ENCODE measurements at regions of chr1 and their contacts with region 1.

Region 1: DNA sequence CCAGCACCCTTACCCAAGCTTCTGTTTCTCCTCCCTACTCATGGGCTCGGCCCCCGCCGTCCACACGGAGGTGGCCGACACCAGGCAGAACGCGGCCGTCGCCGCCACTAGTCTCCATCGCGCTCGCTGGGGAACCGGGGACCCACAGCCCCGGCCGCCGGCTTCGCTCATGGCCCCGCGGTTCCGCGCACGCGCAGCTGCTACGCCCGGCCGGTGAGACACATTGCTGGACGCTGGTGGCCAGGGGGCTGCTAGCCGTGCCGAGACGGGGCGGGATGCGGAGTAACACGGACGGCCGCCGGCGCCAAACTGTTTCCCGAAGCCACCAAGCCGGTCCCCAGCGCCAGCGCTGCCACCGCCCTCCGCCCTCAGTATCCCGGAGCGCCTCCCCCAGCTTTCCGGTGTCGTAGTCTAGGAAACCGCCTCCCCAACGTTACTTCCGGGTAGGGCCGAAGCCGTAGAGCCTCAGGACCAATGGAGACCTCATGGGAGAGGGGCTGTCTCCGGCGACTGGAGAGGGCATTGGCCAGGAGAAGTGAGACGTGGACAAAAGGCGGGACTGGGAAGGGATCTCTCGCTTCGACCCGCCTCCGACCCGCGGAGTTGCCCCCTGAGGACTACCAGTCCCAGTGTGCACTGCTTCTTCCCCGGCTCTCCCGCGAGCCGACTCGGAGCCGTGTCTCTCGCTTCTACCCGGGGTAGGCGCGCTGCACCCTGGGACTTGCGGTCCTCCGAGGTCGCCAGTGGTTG is at the start of gene EDEM3:
- DNase-seq: peak; percentile 100
- H3K4me3 Mint-ChIP-seq: peak within 1 kb of the TSS; percentile 93
- H3K27ac Mint-ChIP-seq: peak within 1 kb of the TSS; percentile 96
- H3K4me1 Mint-ChIP-seq: peaks cover 27% of the 10 kb centered on the region
- H3K27me3 Mint-ChIP-seq: no peaks in the 10 kb centered on the region
- CTCF ChIP-seq: no peak
- total RNA-seq, gene EDEM3: 58.3 and 63.5 TPM in 2 replicates

Region 2: DNA sequence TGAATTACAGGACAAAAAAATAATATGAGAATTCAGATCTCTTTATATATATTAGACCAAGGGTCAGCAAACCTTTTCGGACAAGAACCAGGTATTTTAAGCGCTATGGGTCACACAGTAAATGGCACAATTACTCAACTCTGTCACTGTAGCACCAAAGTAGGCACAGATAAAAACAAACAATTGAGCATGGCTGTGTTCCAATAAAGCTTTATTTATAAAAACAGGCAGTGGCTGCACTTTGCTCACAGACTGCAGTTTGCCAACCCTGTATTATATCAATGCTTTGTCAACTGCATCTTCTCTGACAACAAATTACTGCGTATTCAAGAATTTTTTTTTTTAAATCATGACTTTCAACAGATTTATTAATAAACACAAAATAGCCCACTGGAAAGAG is 29.8 kb before region 1 on chr1:
- CTCF ChIA-PET with region 1: interaction called, 3 read pairs
- POLR2A ChIA-PET with region 1: interaction called, 22 read pairs
- intact Hi-C with region 1: no loop called
- DNase-seq: no peak
- H3K4me3 Mint-ChIP-seq: no peak overlapping the region
- H3K27ac Mint-ChIP-seq: peak overlapping the region; percentile 90
- H3K4me1 Mint-ChIP-seq: peaks cover 4% of the 10 kb centered on the region
- H3K27me3 Mint-ChIP-seq: no peaks in the 10 kb centered on the region
- CTCF ChIP-seq: no peak

Region 3: DNA sequence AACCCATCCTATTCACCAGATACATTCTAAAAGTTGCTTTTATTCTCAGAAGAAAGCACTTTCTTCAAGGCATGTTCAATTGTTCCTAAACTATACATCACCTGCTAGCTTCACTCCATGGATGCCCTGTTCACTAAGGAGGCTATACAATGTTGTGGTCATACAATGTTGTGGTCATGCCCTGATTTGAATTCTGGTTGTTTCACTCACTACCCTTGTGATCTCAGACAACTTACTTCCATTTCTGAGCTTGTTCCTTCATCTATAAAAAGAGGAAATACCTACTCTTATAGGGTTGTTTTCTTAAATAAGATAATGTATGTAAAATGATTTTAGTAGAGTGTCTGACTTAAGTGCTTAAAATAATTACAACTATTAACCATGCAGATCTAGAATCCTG is 19.7 kb before region 1 on chr1:
- CTCF ChIA-PET with region 1: interaction called, 6 read pairs
- POLR2A ChIA-PET with region 1: interaction called, 12 read pairs
- intact Hi-C with region 1: no loop called
- DNase-seq: no peak
- H3K4me3 Mint-ChIP-seq: no peak overlapping the region
- H3K27ac Mint-ChIP-seq: no peak overlapping the region
- H3K4me1 Mint-ChIP-seq: no peaks in the 10 kb centered on the region
- H3K27me3 Mint-ChIP-seq: no peaks in the 10 kb centered on the region
- CTCF ChIP-seq: no peak

Region 4: GRCh38 chr1:184743062-184743756 is 11.4 kb before region 1 on chr1:
- CTCF ChIA-PET with region 1: interaction called, 7 read pairs
- POLR2A ChIA-PET with region 1: interaction called, 18 read pairs
- intact Hi-C with region 1: no loop called
- DNase-seq: no peak
- H3K4me3 Mint-ChIP-seq: no peak overlapping the region
- H3K27ac Mint-ChIP-seq: no peak overlapping the region
- H3K4me1 Mint-ChIP-seq: peaks cover 24% of the 10 kb centered on the region
- H3K27me3 Mint-ChIP-seq: no peaks in the 10 kb centered on the region
- CTCF ChIP-seq: no peak

Region 5: GRCh38 chr1:184775885-184776284 is 21.2 kb after region 1 on chr1:
- CTCF ChIA-PET with region 1: no interaction called
- POLR2A ChIA-PET with region 1: interaction called, 11 read pairs
- intact Hi-C with region 1: no loop called
- DNase-seq: no peak
- H3K4me3 Mint-ChIP-seq: no peak overlapping the region
- H3K27ac Mint-ChIP-seq: no peak overlapping the region
- H3K4me1 Mint-ChIP-seq: no peaks in the 10 kb centered on the region
- H3K27me3 Mint-ChIP-seq: no peaks in the 10 kb centered on the region
- CTCF ChIP-seq: no peak

Region 6: GRCh38 chr1:184792450-184792969 is 37.9 kb after region 1 on chr1:
- CTCF ChIA-PET with region 1: interaction called, 3 read pairs
- POLR2A ChIA-PET with region 1: interaction called, 5 read pairs
- intact Hi-C with region 1: loop called (anchors 1 kb)
- DNase-seq: peak; percentile 99
- H3K4me3 Mint-ChIP-seq: no peak overlapping the region
- H3K27ac Mint-ChIP-seq: peak overlapping the region; percentile 73
- H3K4me1 Mint-ChIP-seq: peaks cover 17% of the 10 kb centered on the region
- H3K27me3 Mint-ChIP-seq: no peaks in the 10 kb centered on the region
- CTCF ChIP-seq: no peak

Region 7: GRCh38 chr1:184822267-184822666 is 67.6 kb after region 1 on chr1:
- CTCF ChIA-PET with region 1: no interaction called
- POLR2A ChIA-PET with region 1: no interaction called
- intact Hi-C with region 1: no loop called
- DNase-seq: peak; percentile 16
- H3K4me3 Mint-ChIP-seq: no peak overlapping the region
- H3K27ac Mint-ChIP-seq: no peak overlapping the region
- H3K4me1 Mint-ChIP-seq: no peaks in the 10 kb centered on the region
- H3K27me3 Mint-ChIP-seq: peaks cover 86% of the 10 kb centered on the region
- CTCF ChIP-seq: no peak

Region 8: DNA sequence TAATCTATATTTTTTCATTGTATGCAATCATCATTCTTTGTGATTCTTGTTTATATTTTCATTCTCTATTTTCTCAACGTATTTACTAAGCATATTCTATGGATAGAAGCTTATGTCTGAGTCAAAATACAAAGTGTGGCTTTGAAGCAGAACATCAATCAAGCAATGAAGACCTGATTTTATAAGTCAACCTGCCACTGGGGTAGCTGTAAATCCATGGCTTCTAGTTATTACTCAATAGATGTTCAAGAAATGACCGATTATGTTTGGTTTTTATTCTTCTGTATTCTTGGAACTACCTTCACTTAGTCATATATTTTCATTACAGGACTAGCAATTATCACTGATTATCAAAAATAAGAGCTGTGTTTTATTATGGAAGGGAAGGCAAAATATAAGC is 1946.1 kb after region 1 on chr1:
- CTCF ChIA-PET with region 1: no interaction called
- POLR2A ChIA-PET with region 1: no interaction called
- intact Hi-C with region 1: no loop called
- DNase-seq: no peak
- H3K4me3 Mint-ChIP-seq: no peak overlapping the region
- H3K27ac Mint-ChIP-seq: no peak overlapping the region
- H3K4me1 Mint-ChIP-seq: no peaks in the 10 kb centered on the region
- H3K27me3 Mint-ChIP-seq: no peaks in the 10 kb centered on the region
- CTCF ChIP-seq: no peak

Measured in MCF 10A (cell line).